ENCODE measurements at regions of chr4 and their contacts with region 1.

Region 1: GRCh38 chr4:87375719-87376291 is 15.2 kb downstream of the HSD17B11 start:
- DNase-seq: peak; percentile 18 to 34
- ATAC-seq: peak; percentile 94

Region 2: GRCh38 chr4:87461281-87461700 is 85.5 kb after region 1 on chr4:
- intact Hi-C with region 1: loop called in 1 of 2 experiments (anchors 5 kb)
- DNase-seq: no peak
- ATAC-seq: peak; percentile 46

Region 3: GRCh38 chr4:87497159-87497558 is 121.4 kb after region 1 on chr4:
- intact Hi-C with region 1: no loop called
- DNase-seq: no peak
- ATAC-seq: no peak

Region 4: GRCh38 chr4:87838890-87839591 is 463.2 kb after region 1 on chr4:
- intact Hi-C with region 1: loop called in 1 of 2 experiments (anchors 10 kb)
- DNase-seq: no peak
- ATAC-seq: no peak